MCF 10A (cell line): ENCODE measurements at regions of chr11 and their contacts with region 1.

Region 1: DNA sequence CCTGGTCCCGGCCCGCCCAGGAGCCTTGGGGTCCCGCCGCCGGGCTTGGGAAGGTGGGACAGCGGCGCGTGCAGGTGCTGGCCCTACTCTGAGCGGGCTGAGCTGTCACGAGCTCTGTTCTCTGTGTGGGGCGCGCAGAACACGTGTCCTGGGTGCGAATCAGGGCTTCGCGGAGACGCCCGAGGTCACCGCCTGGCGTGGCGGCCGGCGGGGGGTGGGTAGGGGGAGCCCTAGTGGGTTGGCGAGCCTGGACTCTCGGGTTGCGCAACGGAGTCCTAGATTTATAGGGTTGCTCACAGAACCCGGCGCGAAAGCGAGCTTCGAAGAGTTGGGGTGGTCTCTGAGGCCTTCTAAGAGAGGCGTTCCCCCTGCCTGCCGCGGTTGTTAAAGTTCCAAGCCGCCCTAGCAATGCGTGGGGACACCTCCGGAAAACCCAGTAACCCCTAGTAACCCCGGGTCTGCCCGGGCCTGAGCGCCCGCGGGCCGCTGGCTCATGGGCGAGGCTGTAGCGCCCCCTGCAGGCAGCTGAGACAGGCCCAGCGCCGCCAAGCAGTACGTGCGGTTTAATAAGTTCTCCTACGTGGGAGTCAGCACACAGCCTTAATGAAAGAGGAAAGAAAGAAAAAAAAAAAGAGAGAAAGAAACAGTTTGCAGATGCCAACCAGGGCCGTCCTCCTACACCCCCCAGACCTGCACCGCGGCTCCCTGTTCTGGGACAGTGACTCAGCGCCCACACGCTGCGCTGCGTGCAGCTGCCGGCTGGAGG is 2.8 kb downstream of the ADM start:
- DNase-seq: peak; percentile 87
- H3K4me3 Mint-ChIP-seq: peak overlapping the region; percentile 79
- H3K27ac Mint-ChIP-seq: peak overlapping the region; percentile 87
- H3K4me1 Mint-ChIP-seq: peaks cover 45% of the 10 kb centered on the region
- H3K27me3 Mint-ChIP-seq: no peaks in the 10 kb centered on the region
- CTCF ChIP-seq: peak; percentile 99

Region 2: GRCh38 chr11:9613118-9613829 is 694.4 kb before region 1 on chr11:
- CTCF ChIA-PET with region 1: no interaction called
- POLR2A ChIA-PET with region 1: interaction called, 9 read pairs
- intact Hi-C with region 1: loop called (anchors 5 kb)
- DNase-seq: peak; percentile 94
- H3K4me3 Mint-ChIP-seq: peak overlapping the region; percentile 77
- H3K27ac Mint-ChIP-seq: peak overlapping the region; percentile 97
- H3K4me1 Mint-ChIP-seq: peaks cover 35% of the 10 kb centered on the region
- H3K27me3 Mint-ChIP-seq: no peaks in the 10 kb centered on the region
- CTCF ChIP-seq: peak; percentile 92

Region 3: DNA sequence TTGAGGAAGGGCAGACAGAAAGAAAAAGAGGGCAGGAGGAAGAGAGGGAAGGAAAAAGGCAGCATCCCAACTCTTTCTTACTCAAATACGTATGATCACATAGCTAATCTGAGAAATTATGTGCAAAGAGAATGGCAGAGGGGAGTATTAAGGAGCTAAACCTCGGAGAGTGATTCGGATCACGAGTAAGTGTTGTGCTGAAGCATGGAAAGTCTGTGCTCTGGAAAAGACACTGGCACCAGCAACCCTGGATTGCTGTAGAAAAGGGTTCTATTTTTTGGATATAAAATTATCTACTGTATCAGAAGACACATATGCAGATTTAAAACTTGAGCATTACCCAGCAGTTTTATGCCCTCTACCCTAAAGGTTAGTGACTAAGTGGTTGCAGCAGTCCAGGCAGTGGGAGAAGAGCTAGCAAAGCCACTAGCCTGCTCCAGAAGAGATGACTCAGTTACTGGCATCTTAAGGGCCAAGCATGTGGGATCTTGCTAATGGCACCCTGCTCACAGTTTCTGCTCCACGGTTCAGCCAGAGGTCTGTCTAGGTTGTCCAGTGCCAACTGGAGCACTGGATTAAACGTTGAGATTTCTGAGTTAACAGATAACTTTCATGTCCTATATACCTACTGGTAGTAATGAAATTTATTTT is 492.0 kb before region 1 on chr11:
- CTCF ChIA-PET with region 1: no interaction called
- POLR2A ChIA-PET with region 1: interaction called, 13 read pairs
- intact Hi-C with region 1: no loop called
- DNase-seq: peak; percentile 86
- H3K4me3 Mint-ChIP-seq: no peak overlapping the region
- H3K27ac Mint-ChIP-seq: no peak overlapping the region
- H3K4me1 Mint-ChIP-seq: peaks cover 12% of the 10 kb centered on the region
- H3K27me3 Mint-ChIP-seq: no peaks in the 10 kb centered on the region
- CTCF ChIP-seq: no peak

Region 4: GRCh38 chr11:10122326-10123197 is 185.1 kb before region 1 on chr11:
- CTCF ChIA-PET with region 1: interaction called, 4 read pairs
- POLR2A ChIA-PET with region 1: interaction called, 42 read pairs
- intact Hi-C with region 1: loop called (anchors 5 kb)
- DNase-seq: peak; percentile 92
- H3K4me3 Mint-ChIP-seq: peak overlapping the region; percentile 52
- H3K27ac Mint-ChIP-seq: peak overlapping the region; percentile 79
- H3K4me1 Mint-ChIP-seq: peaks cover 53% of the 10 kb centered on the region
- H3K27me3 Mint-ChIP-seq: no peaks in the 10 kb centered on the region
- CTCF ChIP-seq: no peak

Region 5: GRCh38 chr11:10243896-10244575 is 63.6 kb before region 1 on chr11:
- CTCF ChIA-PET with region 1: interaction called, 3 read pairs
- POLR2A ChIA-PET with region 1: interaction called, 44 read pairs
- intact Hi-C with region 1: no loop called
- DNase-seq: no peak
- H3K4me3 Mint-ChIP-seq: no peak overlapping the region
- H3K27ac Mint-ChIP-seq: no peak overlapping the region
- H3K4me1 Mint-ChIP-seq: peaks cover 19% of the 10 kb centered on the region
- H3K27me3 Mint-ChIP-seq: no peaks in the 10 kb centered on the region
- CTCF ChIP-seq: no peak

Region 6: GRCh38 chr11:10322830-10323792 is 15.5 kb after region 1 on chr11:
- CTCF ChIA-PET with region 1: interaction called, 50 read pairs
- POLR2A ChIA-PET with region 1: interaction called, 82 read pairs
- intact Hi-C with region 1: no loop called
- DNase-seq: peak; percentile 87
- H3K4me3 Mint-ChIP-seq: no peak overlapping the region
- H3K27ac Mint-ChIP-seq: peak overlapping the region; percentile 54
- H3K4me1 Mint-ChIP-seq: peaks cover 20% of the 10 kb centered on the region
- H3K27me3 Mint-ChIP-seq: no peaks in the 10 kb centered on the region
- CTCF ChIP-seq: peak; percentile 43

Region 7: DNA sequence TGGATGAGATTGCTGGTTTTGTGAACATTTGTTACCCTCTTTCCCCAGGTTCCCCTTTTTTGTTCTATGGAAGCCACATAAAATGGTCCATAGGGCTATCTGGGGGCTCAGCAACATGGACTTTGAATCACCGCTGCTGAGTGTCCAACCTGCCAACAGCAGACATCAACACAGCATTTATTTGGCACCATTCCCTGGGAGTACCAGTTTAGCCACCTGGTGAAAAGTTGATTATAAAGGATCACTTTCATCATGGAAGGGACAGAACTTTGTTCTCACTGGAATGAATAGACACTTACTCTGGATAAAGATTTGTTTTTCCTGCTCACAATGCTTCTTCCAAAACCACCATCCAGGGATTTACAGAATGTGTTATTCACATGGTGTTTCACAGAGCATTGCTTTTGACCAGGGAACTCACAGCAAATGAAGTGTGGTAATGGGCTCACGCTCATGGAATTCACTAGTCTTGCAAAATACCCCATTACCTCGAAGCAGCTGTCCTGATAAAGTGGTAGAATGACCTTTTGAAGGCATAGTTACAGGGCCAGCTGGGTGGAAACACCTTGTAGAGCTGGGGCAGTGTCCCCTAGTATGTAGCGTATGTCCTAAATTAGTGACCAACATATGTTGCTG is 41.1 kb after region 1 on chr11:
- CTCF ChIA-PET with region 1: no interaction called
- POLR2A ChIA-PET with region 1: no interaction called
- intact Hi-C with region 1: no loop called
- DNase-seq: peak; percentile 47
- H3K4me3 Mint-ChIP-seq: no peak overlapping the region
- H3K27ac Mint-ChIP-seq: no peak overlapping the region
- H3K4me1 Mint-ChIP-seq: peaks cover 13% of the 10 kb centered on the region
- H3K27me3 Mint-ChIP-seq: no peaks in the 10 kb centered on the region
- CTCF ChIP-seq: no peak

Region 8: GRCh38 chr11:10359171-10359570 is 51.5 kb after region 1 on chr11:
- CTCF ChIA-PET with region 1: no interaction called
- POLR2A ChIA-PET with region 1: no interaction called
- intact Hi-C with region 1: no loop called
- DNase-seq: no peak
- H3K4me3 Mint-ChIP-seq: no peak overlapping the region
- H3K27ac Mint-ChIP-seq: no peak overlapping the region
- H3K4me1 Mint-ChIP-seq: peaks cover 19% of the 10 kb centered on the region
- H3K27me3 Mint-ChIP-seq: no peaks in the 10 kb centered on the region
- CTCF ChIP-seq: no peak

Region 9: DNA sequence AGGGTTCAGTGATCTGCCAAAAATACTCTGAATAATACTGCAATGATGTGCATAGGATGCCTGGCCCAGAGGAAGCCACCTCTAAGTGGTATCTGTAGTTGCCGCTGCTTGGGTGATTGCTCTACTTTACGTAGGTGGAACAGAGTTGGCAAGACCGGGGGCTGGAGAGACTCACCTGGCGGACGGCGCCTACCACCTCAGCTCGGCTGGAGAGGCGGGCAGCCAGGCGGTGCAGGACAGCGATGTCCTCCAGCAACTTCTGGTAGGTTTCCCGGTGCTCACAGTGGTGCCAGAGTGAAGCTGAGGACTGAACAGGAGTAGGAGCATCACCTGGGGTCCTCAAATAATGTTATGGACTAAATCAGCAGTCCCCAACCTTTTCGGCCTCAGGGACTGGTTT is 295.3 kb after region 1 on chr11:
- CTCF ChIA-PET with region 1: no interaction called
- POLR2A ChIA-PET with region 1: no interaction called
- intact Hi-C with region 1: no loop called
- DNase-seq: no peak
- H3K4me3 Mint-ChIP-seq: no peak overlapping the region
- H3K27ac Mint-ChIP-seq: peak overlapping the region; percentile 83
- H3K4me1 Mint-ChIP-seq: peaks cover 32% of the 10 kb centered on the region
- H3K27me3 Mint-ChIP-seq: no peaks in the 10 kb centered on the region
- CTCF ChIP-seq: no peak